SK-N-SH (cell line): ENCODE measurements at regions of chr10 and their contacts with region 1.

Region 1: GRCh38 chr10:22340362-22341189 is 4.7 kb upstream of the SPAG6 start:
- DNase-seq: peak; percentile 89
- H3K4me3 ChIP-seq: peak overlapping the region; percentile 72 to 84
- H3K27ac ChIP-seq: peak overlapping the region; percentile 91 to 92
- H3K4me1 ChIP-seq: peaks cover 0 to 13% of the 10 kb centered on the region in 2 experiments; a peak in 2 of 4 replicates
- H3K27me3 ChIP-seq: peaks cover 53% of the 10 kb centered on the region
- CTCF ChIP-seq: no peak
- EP300 ChIP-seq: no peak
- RAD21 ChIP-seq: no peak

Region 2: GRCh38 chr10:22316285-22317120 is 24.1 kb before region 1 on chr10 and contains the start of gene COMMD3:
- CTCF ChIA-PET with region 1: interaction called, 5 read pairs
- POLR2A ChIA-PET with region 1: interaction called, 11 read pairs
- DNase-seq: peak; percentile 91
- H3K4me3 ChIP-seq: peak within 1 kb of the TSS; percentile 57 to 93
- H3K27ac ChIP-seq: peak within 1 kb of the TSS; percentile 81 to 96
- H3K4me1 ChIP-seq: peaks cover 5 to 14% of the 10 kb centered on the region in 2 experiments; a peak in 3 of 4 replicates
- H3K27me3 ChIP-seq: no peaks in the 10 kb centered on the region
- CTCF ChIP-seq: no peak
- EP300 ChIP-seq: no peak
- RAD21 ChIP-seq: no peak
- polyA plus RNA-seq, gene COMMD3: 26.9 and 36.5 TPM in 2 replicates

Region 3: DNA sequence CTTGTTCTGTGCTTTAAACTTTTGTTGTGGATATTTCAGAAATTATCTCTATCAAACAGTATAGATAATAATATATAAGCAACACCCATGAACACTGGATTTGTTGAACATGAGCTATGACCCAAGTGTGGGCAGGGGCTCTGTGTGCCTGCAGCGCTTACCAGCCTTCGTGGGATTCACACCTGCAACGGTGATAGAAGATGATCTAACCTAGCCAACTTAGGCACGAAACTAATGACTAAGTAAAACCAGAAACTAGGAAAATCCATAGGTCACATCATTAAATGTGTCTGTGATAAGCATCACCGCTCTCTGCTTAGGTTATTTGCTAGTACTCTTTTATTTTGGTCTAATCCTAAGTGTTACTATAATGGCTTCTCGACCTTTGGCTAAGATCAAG is 22.7 kb after region 1 on chr10:
- CTCF ChIA-PET with region 1: no interaction called
- POLR2A ChIA-PET with region 1: no interaction called
- DNase-seq: no peak
- H3K4me3 ChIP-seq: no peak overlapping the region
- H3K27ac ChIP-seq: no peak overlapping the region
- H3K4me1 ChIP-seq: no peaks in the 10 kb centered on the region
- H3K27me3 ChIP-seq: no peaks in the 10 kb centered on the region
- CTCF ChIP-seq: no peak
- EP300 ChIP-seq: no peak
- RAD21 ChIP-seq: no peak

Region 4: DNA sequence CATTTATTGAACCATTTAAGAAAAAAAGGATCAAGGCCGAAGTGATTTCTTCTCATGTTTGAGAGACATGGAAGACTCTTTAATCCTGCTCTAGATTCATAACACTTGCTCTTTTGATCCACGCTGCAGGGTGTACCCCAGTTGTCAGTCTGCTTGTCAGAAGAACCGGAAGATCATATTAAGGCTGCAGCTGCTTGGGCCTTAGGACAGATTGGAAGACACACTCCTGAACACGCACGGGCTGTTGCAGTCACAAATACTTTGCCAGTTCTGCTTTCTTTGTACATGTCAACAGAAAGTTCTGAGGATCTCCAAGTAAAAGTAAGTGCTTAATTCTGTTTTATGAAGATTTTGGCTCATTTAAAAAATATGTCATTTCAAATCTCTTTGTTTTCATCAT is 51.0 kb after region 1 on chr10:
- CTCF ChIA-PET with region 1: no interaction called
- POLR2A ChIA-PET with region 1: no interaction called
- DNase-seq: no peak
- H3K4me3 ChIP-seq: no peak overlapping the region
- H3K27ac ChIP-seq: no peak overlapping the region
- H3K4me1 ChIP-seq: no peaks in the 10 kb centered on the region; a peak in 1 of 4 replicates
- H3K27me3 ChIP-seq: no peaks in the 10 kb centered on the region
- CTCF ChIP-seq: no peak
- EP300 ChIP-seq: no peak
- RAD21 ChIP-seq: no peak